ENCODE measurements at regions of chr12 and their contacts with region 1.

Region 1: DNA sequence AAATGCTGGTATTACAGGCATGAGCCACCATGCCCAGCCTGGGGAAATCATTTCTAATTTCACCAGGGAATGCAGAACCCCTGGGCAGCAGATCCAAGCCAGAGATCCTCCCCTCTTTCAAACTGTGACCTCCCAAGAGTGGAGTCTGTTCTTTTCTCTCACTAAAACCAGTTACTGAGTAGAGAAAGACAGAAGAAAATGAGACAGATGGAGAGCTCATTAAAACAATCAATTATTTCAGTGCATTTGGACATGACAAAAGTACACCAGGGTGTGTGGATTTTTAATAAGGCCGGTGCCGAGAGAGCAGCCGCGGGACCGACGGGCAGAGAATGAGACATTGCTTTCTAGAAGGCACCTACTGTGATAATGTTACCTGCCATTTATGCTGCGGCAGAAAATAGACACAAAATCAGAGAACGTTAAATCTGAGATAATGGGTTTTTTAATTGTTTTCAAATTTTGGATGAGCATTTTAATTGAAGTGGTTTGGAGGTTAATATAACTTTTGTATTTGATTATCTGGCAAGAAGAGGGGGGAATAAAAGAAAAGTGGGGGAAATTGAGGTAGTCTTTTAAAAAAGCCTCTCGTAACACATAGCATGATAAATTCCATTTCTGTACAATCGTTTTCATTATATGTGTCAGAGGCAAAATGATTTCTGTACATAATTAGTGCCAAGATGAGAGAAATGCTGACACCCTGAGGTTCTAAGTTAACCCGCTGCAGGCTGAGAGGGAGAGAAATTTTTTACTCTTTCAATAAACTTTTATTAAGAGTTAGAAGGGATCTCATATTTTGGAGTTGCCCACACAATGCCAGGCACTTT is 70.8 kb downstream of the HSPB8 start:
- DNase-seq: no peak
- H3K4me3 ChIP-seq: no peak overlapping the region
- H3K27ac ChIP-seq: no peak overlapping the region
- H3K4me1 ChIP-seq: peaks cover 0 to 22% of the 10 kb centered on the region in 2 donors
- H3K27me3 ChIP-seq: no peaks in the 10 kb centered on the region
- CTCF ChIP-seq: no peak

Region 2: GRCh38 chr12:119328111-119328510 is 78.6 kb after region 1 on chr12:
- intact Hi-C with region 1: loop called (anchors 5 kb)
- DNase-seq: no peak
- H3K4me3 ChIP-seq: no peak overlapping the region
- H3K27ac ChIP-seq: peak overlapping the region in 1 of 2 donors; percentile 42
- H3K4me1 ChIP-seq: peaks cover 0 to 16% of the 10 kb centered on the region in 2 donors
- H3K27me3 ChIP-seq: no peaks in the 10 kb centered on the region
- CTCF ChIP-seq: peak; percentile 8 to 40 (median 34)